Heart left ventricle (tissue), 16 donors: ENCODE measurements at regions of chr10 and their contacts with region 1.

Region 1: DNA sequence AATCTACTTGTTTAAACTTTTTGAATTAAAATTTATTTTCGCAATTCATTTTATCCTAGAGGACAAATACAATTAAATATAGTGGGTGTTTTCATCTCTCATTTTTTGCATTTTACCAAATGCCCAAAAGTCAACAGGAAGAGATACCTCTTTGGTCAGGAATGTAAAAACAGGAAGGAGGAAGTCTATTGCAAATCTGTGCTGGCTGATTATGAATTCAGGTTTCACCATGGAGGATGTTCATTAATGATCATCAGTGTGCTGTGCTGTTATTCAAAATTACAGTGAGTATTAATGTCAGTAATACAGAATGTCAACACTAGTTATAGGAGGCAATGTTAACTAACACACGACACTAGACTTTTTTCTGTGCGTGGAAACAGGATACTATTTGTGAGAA is 24.7 kb downstream of the EXOC6 start:
- DNase-seq: no peak
- ATAC-seq: no peak
- H3K4me3 ChIP-seq: no peak overlapping the region
- H3K27ac ChIP-seq: peak overlapping the region in 1 of 12 donors; percentile 0
- H3K4me1 ChIP-seq: peaks cover 0 to 26% (median 2%) of the 10 kb centered on the region in 12 donors
- H3K27me3 ChIP-seq: no peaks in the 10 kb centered on the region
- CTCF ChIP-seq: no peak
- POLR2A ChIP-seq: no peak

Region 2: GRCh38 chr10:92517034-92517655 is 355.9 kb before region 1 on chr10:
- intact Hi-C with region 1: loop called in 5 of 10 experiments (anchors 5 kb)
- DNase-seq: peak in 3 of 5 donors; percentile 55 to 69 (median 61)
- ATAC-seq: peak; percentile 73 to 85 (median 82)
- H3K4me3 ChIP-seq: no peak overlapping the region
- H3K27ac ChIP-seq: no peak overlapping the region
- H3K4me1 ChIP-seq: peaks cover 0 to 3% (median 0%) of the 10 kb centered on the region in 12 donors
- H3K27me3 ChIP-seq: no peaks in the 10 kb centered on the region
- CTCF ChIP-seq: peak; percentile 69 to 85 (median 80)
- POLR2A ChIP-seq: no peak

Region 3: DNA sequence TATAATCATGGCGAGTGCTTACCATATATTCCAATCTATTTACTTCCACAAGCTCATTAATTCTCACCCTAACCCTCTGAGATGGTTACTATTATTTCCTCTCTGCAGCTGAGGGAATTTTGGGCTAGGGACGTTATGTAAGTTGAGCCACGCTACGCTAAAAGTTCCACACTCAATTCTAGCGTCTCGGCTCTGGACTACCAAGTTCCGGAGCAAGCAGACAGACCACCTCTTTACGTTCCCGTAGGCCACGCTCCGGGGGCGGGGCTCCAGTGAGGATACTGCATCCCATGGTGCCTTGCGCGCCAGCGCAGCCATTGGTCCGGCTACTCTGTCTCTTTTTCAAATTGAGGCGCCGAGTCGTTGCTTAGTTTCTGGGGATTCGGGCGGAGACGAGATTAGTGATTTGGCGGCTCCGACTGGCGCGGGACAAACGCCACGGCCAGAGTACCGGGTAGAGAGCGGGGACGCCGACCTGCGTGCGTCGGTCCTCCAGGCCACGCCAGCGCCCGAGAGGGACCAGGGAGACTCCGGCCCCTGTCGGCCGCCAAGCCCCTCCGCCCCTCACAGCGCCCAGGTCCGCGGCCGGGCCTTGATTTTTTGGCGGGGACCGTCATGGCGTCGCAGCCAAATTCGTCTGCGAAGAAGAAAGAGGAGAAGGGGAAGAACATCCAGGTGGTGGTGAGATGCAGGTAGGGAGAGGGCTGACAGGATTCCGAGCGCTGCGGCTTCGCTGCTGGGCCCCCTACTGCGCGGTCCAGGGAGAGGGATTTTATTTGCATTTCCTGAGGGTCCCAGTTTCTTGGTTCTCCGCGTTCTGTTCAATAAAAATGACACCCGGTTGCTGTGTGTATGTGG is 280.0 kb before region 1 on chr10 and contains the start of gene KIF11:
- intact Hi-C with region 1: loop called in 2 of 10 experiments (anchors 5 to 10 kb)
- DNase-seq: peak; percentile 97 to 99 (median 98)
- ATAC-seq: peak; percentile 96 to 97 (median 96)
- H3K4me3 ChIP-seq: peak within 1 kb of the TSS; percentile 35 to 94 (median 69)
- H3K27ac ChIP-seq: peak within 1 kb of the TSS; percentile 75 to 97 (median 93)
- H3K4me1 ChIP-seq: peaks cover 0 to 29% (median 12%) of the 10 kb centered on the region in 12 donors
- H3K27me3 ChIP-seq: no peaks in the 10 kb centered on the region
- CTCF ChIP-seq: peak in 1 of 12 donors; percentile 11
- POLR2A ChIP-seq: peak in 1 of 2 donors; percentile 80
- total RNA-seq, gene KIF11: 0.13 to 7.0 (median 0.76) TPM

Region 4: GRCh38 chr10:92822060-92822634 is 50.9 kb before region 1 on chr10:
- intact Hi-C with region 1: loop called in 2 of 10 experiments (anchors 5 to 10 kb)
- DNase-seq: no peak
- ATAC-seq: peak in 3 of 4 donors; percentile 64 to 86 (median 71)
- H3K4me3 ChIP-seq: no peak overlapping the region
- H3K27ac ChIP-seq: peak overlapping the region in 9 of 12 donors; percentile 1 to 53 (median 37)
- H3K4me1 ChIP-seq: peaks cover 0 to 22% (median 10%) of the 10 kb centered on the region in 12 donors
- H3K27me3 ChIP-seq: no peaks in the 10 kb centered on the region
- CTCF ChIP-seq: no peak
- POLR2A ChIP-seq: no peak

Region 5: DNA sequence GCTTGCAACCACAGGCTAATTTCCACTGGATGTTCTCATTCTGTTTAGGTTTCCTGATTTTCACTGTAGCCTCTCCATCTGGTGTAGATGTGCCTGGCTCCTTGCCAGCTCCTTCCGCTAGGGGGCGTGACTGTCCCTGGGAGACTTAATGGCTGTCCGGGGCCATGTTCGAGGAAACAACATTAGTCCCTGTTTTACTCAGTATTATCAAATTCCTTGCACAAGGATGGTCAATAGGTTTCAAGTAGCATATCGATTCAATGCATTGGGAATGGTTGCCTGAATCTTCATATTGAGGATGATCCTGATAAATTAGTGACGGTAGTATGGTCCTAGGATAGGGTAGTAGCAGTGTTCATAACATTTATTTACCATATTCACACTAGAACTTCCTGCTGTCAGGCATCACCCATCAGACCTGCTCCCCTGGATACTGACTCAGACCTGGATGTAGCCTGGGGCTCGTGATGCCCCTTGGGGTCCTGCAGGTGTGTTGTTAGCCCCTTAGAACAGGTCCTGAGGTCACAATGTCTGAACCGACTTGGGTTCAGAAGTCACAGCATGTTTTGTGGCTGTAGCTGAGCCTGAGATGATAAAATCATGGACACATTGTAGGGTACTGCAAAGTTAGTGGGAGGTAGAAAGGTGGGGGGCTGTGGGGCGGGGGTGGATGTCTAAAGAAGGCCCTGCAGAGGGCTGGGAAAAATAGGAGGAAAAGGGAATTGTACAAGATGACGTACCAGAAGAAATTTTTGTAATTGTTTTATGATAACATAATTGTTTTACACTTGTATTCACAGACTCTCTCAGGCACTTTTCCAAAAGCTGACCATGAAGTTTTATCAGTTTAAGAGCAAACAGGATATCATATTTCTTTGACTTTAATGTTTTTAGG is 33.6 kb before region 1 on chr10:
- intact Hi-C with region 1: loop called in 4 of 10 experiments (anchors 5 kb)
- DNase-seq: peak; percentile 62 to 88 (median 69)
- ATAC-seq: peak in 3 of 4 donors; percentile 20 to 71 (median 46)
- H3K4me3 ChIP-seq: no peak overlapping the region
- H3K27ac ChIP-seq: peak overlapping the region in 9 of 12 donors; percentile 19 to 75 (median 63)
- H3K4me1 ChIP-seq: peaks cover 0 to 23% (median 9%) of the 10 kb centered on the region in 12 donors
- H3K27me3 ChIP-seq: no peaks in the 10 kb centered on the region
- CTCF ChIP-seq: peak in 7 of 12 donors; percentile 26 to 52 (median 38)
- POLR2A ChIP-seq: no peak